ENCODE measurements at regions of chr17 and their contacts with region 1.

Region 1: DNA sequence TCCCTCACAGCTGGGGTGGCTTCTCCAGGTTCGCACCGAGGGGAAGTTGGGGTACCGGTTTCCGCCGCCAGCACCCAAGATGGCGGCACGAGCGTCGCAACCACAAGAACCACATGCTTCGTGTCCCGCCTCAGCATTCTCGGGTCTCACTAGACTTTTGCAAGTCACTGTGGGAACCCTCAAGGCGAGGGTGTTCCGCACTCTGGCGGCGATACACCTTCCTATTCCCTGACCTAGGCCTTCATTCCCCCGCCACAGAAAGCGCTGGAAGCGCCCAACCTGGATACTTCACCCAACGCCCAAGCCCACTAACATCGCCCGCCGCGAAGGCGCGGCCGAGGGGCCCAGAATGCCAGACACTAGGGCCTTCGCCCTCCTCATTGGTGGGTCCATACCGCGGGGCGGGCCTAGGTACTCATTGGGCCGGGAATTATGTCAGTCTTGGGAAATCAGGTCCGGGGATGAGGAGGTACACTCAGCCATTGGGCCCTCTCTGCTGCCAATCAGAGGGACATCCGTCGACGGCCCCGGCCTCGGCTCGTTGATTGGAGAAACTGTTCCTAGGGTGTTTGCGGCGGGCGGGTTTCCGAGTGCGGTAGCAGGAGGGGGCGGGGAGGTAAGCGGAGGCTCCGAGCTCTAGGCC is at the start of gene NFE2L1:
- DNase-seq: peak; percentile 96
- H3K4me3 ChIP-seq: peak within 1 kb of the TSS; percentile 85 to 95 (median 89)
- H3K27ac ChIP-seq: peak within 1 kb of the TSS; percentile 97
- H3K4me1 ChIP-seq: peaks cover 8 to 29% (median 23%) of the 10 kb centered on the region in 4 experiments; a peak in 6 of 7 replicates
- H3K27me3 ChIP-seq: no peaks in the 10 kb centered on the region
- CTCF ChIP-seq: no peak
- EP300 ChIP-seq: no peak
- POLR2A ChIP-seq: peak; percentile 69 to 95
- RAD21 ChIP-seq: no peak
- total RNA-seq, gene NFE2L1: 140 and 148 TPM in 2 replicates

Region 2: DNA sequence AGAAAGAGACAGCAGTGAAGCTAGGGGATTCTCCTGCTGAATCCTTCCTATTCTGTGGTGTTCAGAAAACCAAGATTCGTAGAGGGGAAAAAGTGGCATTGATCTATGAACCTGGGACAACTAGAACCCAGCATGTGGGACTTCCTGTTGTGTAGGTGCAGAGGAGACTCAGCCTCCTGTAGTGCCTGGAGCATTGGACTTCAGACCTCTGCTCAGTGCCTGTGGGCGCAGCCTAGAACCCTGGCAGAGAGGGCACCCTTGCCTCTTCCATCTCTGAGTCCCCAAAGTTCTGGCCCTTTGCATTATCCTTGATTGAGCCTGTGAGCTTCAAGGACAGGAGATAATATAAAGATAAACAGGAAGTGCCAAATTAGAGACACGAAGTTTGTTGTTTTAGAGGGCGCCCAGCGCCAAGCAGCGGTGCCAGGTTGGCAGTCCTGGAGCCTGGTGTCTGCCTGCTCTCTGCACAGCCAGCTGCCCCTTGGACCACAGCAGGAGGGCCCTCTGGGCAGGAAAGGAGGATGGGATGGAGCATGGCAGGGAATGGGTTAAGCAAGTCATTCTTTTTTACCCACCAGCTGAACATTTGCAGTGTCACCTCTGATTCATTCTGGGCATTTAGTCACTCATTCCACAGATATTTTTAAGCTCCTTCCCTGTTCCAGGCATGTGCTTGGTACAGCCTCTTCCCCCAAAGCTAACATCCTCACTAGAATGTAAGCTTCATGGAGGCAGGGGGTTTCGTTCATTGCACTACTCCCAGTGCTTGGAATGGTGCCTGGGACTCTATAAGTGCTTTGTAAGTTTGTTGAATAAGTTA is 185.0 kb before region 1 on chr17:
- CTCF ChIA-PET with region 1: no interaction called
- POLR2A ChIA-PET with region 1: no interaction called
- DNase-seq: no peak
- H3K4me3 ChIP-seq: no peak overlapping the region
- H3K27ac ChIP-seq: no peak overlapping the region
- H3K4me1 ChIP-seq: peaks cover 0 to 4% (median 0%) of the 10 kb centered on the region in 4 experiments; a peak in 1 of 7 replicates
- H3K27me3 ChIP-seq: peaks cover 0 to 2% (median under 1%) of the 10 kb centered on the region in 4 experiments; a peak in 4 of 7 replicates
- CTCF ChIP-seq: no peak
- EP300 ChIP-seq: no peak
- POLR2A ChIP-seq: no peak
- RAD21 ChIP-seq: no peak

Region 3: DNA sequence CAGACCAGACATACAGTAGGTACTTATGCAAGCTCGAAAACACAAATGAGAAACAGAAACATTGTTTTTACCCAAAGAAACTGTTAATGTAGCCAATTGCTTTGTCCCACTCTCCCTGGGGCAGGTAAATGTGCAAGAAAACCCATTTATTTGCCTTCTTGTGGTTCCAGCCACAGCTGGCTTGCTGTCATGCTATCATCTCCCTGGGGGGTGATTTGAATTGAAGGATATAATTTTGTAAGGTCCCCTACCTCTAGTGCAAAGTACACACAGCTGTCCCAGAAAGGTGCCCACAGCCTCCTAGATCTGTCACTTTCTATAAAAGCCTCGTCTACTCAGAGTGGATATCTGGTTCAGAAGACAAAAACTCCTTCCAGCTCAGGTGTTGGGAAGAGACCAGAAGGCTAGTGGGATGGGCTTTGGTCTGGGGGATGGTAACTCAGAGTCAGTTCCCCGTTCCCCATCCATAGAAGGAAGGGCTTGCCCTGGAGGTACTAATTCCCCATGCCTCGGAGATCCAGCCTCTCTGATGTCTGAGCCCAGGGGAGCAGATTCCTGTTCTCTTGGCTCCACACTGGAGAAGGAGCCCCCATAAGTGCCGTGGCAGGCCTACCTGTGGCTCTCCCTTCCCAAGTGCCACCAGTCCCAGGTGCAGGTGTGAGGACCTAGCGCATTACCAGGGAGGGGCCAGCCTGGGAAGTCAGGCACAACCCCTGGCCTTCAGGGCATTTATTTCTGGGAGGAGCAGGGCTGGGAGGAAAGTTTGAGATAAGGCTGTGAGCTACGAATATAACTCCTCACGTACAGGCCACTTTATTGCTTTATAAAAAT is 87.8 kb before region 1 on chr17:
- CTCF ChIA-PET with region 1: no interaction called
- POLR2A ChIA-PET with region 1: no interaction called
- DNase-seq: no peak
- H3K4me3 ChIP-seq: no peak overlapping the region
- H3K27ac ChIP-seq: no peak overlapping the region
- H3K4me1 ChIP-seq: peaks cover 0 to 20% (median 17%) of the 10 kb centered on the region in 4 experiments; a peak in 6 of 7 replicates
- H3K27me3 ChIP-seq: no peaks in the 10 kb centered on the region
- CTCF ChIP-seq: no peak
- EP300 ChIP-seq: no peak
- POLR2A ChIP-seq: no peak
- RAD21 ChIP-seq: no peak

Region 4: DNA sequence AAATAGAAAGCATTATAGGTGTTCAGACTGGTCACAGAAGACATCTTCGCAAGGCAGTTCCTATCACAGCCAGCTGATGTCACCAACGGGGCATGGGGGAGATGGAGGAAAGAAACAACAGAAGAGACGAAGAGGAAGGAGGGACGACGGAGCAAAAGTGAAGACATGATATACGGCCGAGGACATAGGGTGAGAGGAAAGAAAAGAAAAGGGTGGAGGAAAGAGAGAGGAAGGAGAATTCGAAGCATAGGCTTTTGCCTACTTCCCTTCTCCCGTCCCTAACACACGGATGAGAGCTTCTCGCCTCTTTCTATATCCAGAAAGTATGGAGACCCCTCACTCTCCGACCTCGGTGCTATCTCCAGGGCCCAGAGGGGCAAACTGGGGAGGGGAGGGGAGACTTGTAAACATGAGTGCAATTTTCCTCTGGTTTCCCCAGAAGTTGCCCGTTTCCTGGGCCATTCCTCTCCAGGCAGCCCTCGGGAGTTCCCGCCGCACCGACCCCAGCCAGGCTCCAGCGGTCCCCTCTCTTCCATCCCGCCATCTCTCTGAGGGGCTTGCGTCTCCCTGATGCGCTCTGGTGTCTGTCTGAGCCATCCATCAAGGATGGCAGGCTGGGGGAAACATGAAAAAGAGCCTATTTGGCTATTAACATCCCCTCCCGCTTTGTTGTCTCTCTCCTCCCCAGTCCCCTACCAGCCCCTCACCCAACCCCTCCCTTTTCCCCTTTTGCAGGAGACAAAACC is 36.3 kb before region 1 on chr17:
- CTCF ChIA-PET with region 1: no interaction called
- POLR2A ChIA-PET with region 1: interaction called, 11 read pairs
- DNase-seq: peak in 1 of 2 experiments; percentile 72
- H3K4me3 ChIP-seq: peak overlapping the region; percentile 61 to 75 (median 66)
- H3K27ac ChIP-seq: no peak overlapping the region
- H3K4me1 ChIP-seq: peaks cover 4 to 14% (median 9%) of the 10 kb centered on the region in 4 experiments
- H3K27me3 ChIP-seq: peaks cover 0 to 13% (median 8%) of the 10 kb centered on the region in 4 experiments; a peak in 6 of 7 replicates
- CTCF ChIP-seq: peak; percentile 40 to 66 (median 63)
- EP300 ChIP-seq: no peak
- POLR2A ChIP-seq: no peak
- RAD21 ChIP-seq: peak; percentile 45 to 60; a peak in 3 of 4 replicates

Region 5: GRCh38 chr17:48068491-48068961 is 20.7 kb after region 1 on chr17:
- CTCF ChIA-PET with region 1: interaction called, 203 read pairs
- POLR2A ChIA-PET with region 1: interaction called, 1,227 read pairs
- DNase-seq: peak in 1 of 2 experiments; percentile 62
- H3K4me3 ChIP-seq: no peak overlapping the region
- H3K27ac ChIP-seq: no peak overlapping the region
- H3K4me1 ChIP-seq: peaks cover 0 to 2% (median 0%) of the 10 kb centered on the region in 4 experiments; a peak in 1 of 7 replicates
- H3K27me3 ChIP-seq: no peaks in the 10 kb centered on the region
- CTCF ChIP-seq: peak; percentile 60 to 74 (median 69)
- EP300 ChIP-seq: no peak
- POLR2A ChIP-seq: no peak
- RAD21 ChIP-seq: peak; percentile 39 to 51

Region 6: DNA sequence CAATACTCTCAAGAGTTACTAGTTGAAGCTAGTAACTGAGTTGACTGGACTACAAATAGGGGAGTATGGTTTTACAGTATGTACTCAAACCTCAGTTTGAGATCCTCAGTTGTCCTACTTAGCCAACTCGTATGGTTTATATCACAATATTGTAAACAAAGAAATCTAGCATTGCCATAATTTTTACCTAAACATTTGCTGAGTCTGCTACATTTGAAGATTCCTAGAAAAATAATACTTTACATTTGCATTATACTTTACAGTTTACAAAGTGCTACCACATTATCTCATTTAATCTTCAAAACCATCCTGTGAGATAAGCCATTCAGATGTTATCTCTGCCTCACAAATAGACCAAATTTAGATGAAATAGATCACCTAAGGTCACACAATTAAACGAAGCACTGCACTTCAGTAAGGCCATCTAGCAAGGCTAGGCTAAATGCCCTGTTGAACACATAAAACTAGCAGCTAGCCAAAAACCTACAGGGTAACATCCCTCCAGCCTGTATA is 37.1 kb after region 1 on chr17:
- CTCF ChIA-PET with region 1: interaction called, 203 read pairs
- POLR2A ChIA-PET with region 1: interaction called, 1,227 read pairs
- DNase-seq: no peak
- H3K4me3 ChIP-seq: no peak overlapping the region
- H3K27ac ChIP-seq: no peak overlapping the region
- H3K4me1 ChIP-seq: no peaks in the 10 kb centered on the region
- H3K27me3 ChIP-seq: no peaks in the 10 kb centered on the region
- CTCF ChIP-seq: no peak
- EP300 ChIP-seq: no peak
- POLR2A ChIP-seq: no peak
- RAD21 ChIP-seq: no peak

Region 7: GRCh38 chr17:48107168-48108132 is 59.6 kb after region 1 on chr17 and contains the start of gene SNX11:
- CTCF ChIA-PET with region 1: interaction called, 3 read pairs
- POLR2A ChIA-PET with region 1: interaction called, 112 read pairs
- DNase-seq: peak; percentile 61 to 96
- H3K4me3 ChIP-seq: peak within 1 kb of the TSS; percentile 82 to 95 (median 88)
- H3K27ac ChIP-seq: peak within 1 kb of the TSS; percentile 69
- H3K4me1 ChIP-seq: no peaks in the 10 kb centered on the region; a peak in 1 of 7 replicates
- H3K27me3 ChIP-seq: no peaks in the 10 kb centered on the region
- CTCF ChIP-seq: no peak
- EP300 ChIP-seq: no peak
- POLR2A ChIP-seq: peak in 1 of 2 experiments; percentile 41; a peak in 1 of 3 replicates
- RAD21 ChIP-seq: no peak
- total RNA-seq, gene SNX11: 20.9 and 21.1 TPM in 2 replicates

Measured in H1 (cell line).